GM12878 (cell line): ENCODE measurements at regions of chr3 and their contacts with region 1.

Region 1: GRCh38 chr3:171566803-171567422 is 106.7 kb upstream of the TNIK start:
- DNase-seq: peak; percentile 42
- ATAC-seq: peak; percentile 81
- H3K4me3 ChIP-seq: no peak overlapping the region
- H3K27ac ChIP-seq: no peak overlapping the region
- H3K4me1 ChIP-seq: peaks cover 3% of the 10 kb centered on the region; the same call in 1 of the 2 replicates
- H3K27me3 ChIP-seq: no peaks in the 10 kb centered on the region
- CTCF ChIP-seq: peak; percentile 46 to 86 (median 63); a peak in 5 of 6 replicates
- EP300 ChIP-seq: no peak
- POLR2A ChIP-seq: no peak
- RAD21 ChIP-seq: peak; percentile 95

Region 2: DNA sequence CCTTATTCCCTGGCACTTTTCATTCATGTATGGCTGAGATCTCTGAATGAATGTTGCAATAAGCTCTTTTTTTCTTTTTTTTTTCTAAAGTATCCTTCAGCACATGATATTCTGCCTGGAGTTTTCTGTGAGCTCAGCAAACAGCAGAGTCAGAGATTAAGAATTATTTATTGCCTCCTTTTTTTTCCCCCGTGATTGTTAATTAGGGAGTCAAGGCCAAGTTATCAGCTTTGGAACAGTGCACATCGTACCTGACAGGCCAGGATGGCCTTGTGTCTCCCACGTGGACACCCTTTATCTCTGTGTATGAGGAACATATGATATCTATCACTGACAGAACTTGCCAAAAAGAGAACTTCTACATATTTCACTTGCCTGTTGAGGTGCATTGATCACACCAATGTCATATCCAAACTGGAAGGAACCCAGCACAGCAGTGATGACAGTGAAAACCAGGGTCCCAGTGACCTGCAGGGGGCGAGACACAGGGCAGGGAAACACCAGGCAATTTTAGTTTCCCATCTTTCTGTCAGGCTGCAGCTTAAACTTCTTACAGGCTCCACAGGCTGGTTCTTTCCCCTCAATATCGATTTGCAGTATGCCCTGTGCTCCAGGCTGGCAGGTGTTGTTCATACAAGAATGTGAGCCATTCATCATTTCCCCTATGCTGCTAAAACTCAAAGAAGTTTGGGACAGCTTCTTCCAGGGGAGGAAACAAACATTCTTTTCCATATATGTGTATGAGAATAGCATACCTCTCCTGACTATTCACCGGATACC is 548.6 kb before region 1 on chr3:
- CTCF ChIA-PET with region 1: interaction called, 21 read pairs
- POLR2A ChIA-PET with region 1: no interaction called
- RAD21 ChIA-PET with region 1: interaction called, 4 read pairs
- SMC1A ChIA-PET with region 1: interaction called, 3 read pairs
- in situ Hi-C with region 1: no loop called
- intact Hi-C with region 1: no loop called
- DNase-seq: no peak
- ATAC-seq: peak; percentile 56
- H3K4me3 ChIP-seq: no peak overlapping the region
- H3K27ac ChIP-seq: no peak overlapping the region
- H3K4me1 ChIP-seq: no peaks in the 10 kb centered on the region
- H3K27me3 ChIP-seq: no peaks in the 10 kb centered on the region; a peak in 1 of 4 replicates
- CTCF ChIP-seq: 0 out of 6 replicates have a peak, but pooled peaks of 2 of the 3 experiments have one; percentile 2 to 16
- EP300 ChIP-seq: no peak
- POLR2A ChIP-seq: no peak
- RAD21 ChIP-seq: no peak

Region 3: DNA sequence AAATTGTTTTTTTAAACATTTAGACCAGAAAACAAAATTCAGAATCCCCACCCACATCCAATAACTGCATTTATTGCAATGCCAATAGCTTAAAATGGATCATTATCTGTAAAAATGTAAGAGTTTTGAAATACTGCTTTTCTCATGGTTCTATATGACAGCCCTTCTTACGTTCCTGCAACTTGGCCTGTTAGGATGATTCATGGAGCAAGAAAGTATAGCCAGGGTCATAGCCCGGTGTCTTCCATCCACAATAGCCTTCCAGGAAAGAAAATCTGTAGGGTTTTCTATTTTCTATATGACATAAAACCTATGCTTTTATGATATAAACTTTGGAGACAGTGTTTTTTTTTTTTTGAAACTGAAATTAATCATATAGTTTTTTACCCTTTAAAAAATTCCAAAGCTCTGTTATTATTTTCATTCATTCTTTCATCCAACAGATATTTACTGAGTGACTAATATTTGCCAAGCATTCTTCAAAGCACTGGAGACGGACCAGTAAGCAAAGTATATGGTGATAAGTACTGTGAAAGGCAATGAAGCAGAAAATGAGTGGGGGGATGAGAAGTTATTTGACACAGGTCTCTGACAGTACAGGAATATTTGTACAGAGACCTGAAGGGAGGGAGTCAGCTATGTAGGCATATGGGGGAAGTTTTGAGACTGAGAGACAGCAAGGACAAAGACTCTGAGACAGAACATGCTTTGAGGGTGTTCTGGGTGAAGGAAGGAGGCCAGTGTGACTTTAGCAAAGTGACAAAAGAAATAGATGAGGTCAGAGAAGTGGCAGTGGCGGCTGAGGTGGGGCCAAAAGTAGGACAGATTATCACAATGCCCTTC is 511.4 kb before region 1 on chr3:
- CTCF ChIA-PET with region 1: interaction called, 94 read pairs
- POLR2A ChIA-PET with region 1: no interaction called
- RAD21 ChIA-PET with region 1: interaction called, 59 read pairs
- SMC1A ChIA-PET with region 1: interaction called, 79 read pairs
- in situ Hi-C with region 1: no loop called
- intact Hi-C with region 1: loop called (anchors 1 kb)
- DNase-seq: no peak
- ATAC-seq: peak; percentile 9; the same call in 1 of the 3 replicates
- H3K4me3 ChIP-seq: no peak overlapping the region
- H3K27ac ChIP-seq: no peak overlapping the region
- H3K4me1 ChIP-seq: no peaks in the 10 kb centered on the region
- H3K27me3 ChIP-seq: no peaks in the 10 kb centered on the region
- CTCF ChIP-seq: no peak
- EP300 ChIP-seq: no peak
- POLR2A ChIP-seq: no peak
- RAD21 ChIP-seq: no peak

Region 4: GRCh38 chr3:171162986-171163723 is 403.8 kb before region 1 on chr3:
- CTCF ChIA-PET with region 1: interaction called, 37 read pairs
- POLR2A ChIA-PET with region 1: no interaction called
- RAD21 ChIA-PET with region 1: interaction called, 18 read pairs
- SMC1A ChIA-PET with region 1: interaction called, 22 read pairs
- in situ Hi-C with region 1: loop called (anchors 5 kb)
- intact Hi-C with region 1: loop called (anchors 1 kb)
- DNase-seq: no peak
- ATAC-seq: peak; percentile 50
- H3K4me3 ChIP-seq: no peak overlapping the region
- H3K27ac ChIP-seq: no peak overlapping the region; the same call in 1 of the 2 replicates
- H3K4me1 ChIP-seq: peaks cover 14% of the 10 kb centered on the region
- H3K27me3 ChIP-seq: no peaks in the 10 kb centered on the region
- CTCF ChIP-seq: peak; percentile 58 to 87 (median 63); a peak in 5 of 6 replicates
- EP300 ChIP-seq: no peak
- POLR2A ChIP-seq: no peak
- RAD21 ChIP-seq: peak; percentile 77

Region 5: GRCh38 chr3:171248425-171249111 is 318.3 kb before region 1 on chr3:
- CTCF ChIA-PET with region 1: no interaction called
- POLR2A ChIA-PET with region 1: no interaction called
- RAD21 ChIA-PET with region 1: no interaction called
- SMC1A ChIA-PET with region 1: interaction called, 14 read pairs
- in situ Hi-C with region 1: no loop called
- intact Hi-C with region 1: loop called (anchors 10 kb)
- DNase-seq: no peak
- ATAC-seq: peak; percentile 80
- H3K4me3 ChIP-seq: peak overlapping the region; percentile 53
- H3K27ac ChIP-seq: peak overlapping the region; percentile 80
- H3K4me1 ChIP-seq: peaks cover 68% of the 10 kb centered on the region
- H3K27me3 ChIP-seq: no peaks in the 10 kb centered on the region
- CTCF ChIP-seq: no peak
- EP300 ChIP-seq: peak; percentile 80 to 90
- POLR2A ChIP-seq: no peak
- RAD21 ChIP-seq: no peak

Region 6: DNA sequence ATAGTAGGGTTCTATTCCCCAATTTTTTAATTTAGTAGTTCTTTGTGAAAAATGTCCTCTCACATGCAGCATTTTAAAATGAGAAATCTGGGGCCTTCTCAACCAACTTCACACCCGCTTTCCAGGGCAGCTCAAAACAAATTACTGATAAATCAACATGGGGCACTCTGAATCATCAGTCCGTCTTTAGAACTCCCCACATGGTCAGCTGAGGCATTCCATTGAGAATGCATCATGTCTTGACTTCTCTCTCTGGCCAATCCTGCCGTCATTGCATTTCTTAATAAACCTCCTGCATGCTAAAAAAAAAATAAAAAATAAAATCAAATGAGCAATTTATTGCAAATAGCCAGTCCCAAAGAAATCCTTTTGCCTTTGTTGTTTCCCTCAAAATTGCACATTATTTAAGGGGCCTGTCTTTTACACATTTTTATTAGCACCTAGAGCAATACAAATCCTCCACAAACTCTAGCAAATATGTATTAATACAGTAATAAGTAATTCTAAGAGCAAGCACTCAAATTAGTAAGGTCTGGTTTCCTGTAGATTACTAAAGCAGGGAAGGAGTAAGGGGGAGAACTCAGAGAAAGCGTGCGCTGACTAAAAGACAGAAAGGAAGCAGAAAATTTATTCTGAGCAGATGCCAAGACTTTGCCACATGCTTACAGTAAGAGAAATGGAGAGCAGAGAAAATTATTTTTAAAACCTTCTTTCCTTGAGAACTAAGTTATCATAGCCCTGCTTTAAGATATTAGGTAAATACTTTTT is 282.4 kb before region 1 on chr3:
- CTCF ChIA-PET with region 1: interaction called, 4 read pairs
- POLR2A ChIA-PET with region 1: no interaction called
- RAD21 ChIA-PET with region 1: interaction called, 3 read pairs
- SMC1A ChIA-PET with region 1: interaction called, 5 read pairs
- in situ Hi-C with region 1: no loop called
- intact Hi-C with region 1: loop called (anchors 10 kb)
- DNase-seq: peak; percentile 76
- ATAC-seq: peak; percentile 64
- H3K4me3 ChIP-seq: peak overlapping the region; percentile 36; the same call in 1 of the 2 replicates
- H3K27ac ChIP-seq: peak overlapping the region; percentile 96
- H3K4me1 ChIP-seq: peaks cover 61% of the 10 kb centered on the region
- H3K27me3 ChIP-seq: no peaks in the 10 kb centered on the region
- CTCF ChIP-seq: no peak
- EP300 ChIP-seq: peak in 1 of 2 experiments; percentile 21; a peak in 1 of 4 replicates
- POLR2A ChIP-seq: no peak
- RAD21 ChIP-seq: no peak

Region 7: DNA sequence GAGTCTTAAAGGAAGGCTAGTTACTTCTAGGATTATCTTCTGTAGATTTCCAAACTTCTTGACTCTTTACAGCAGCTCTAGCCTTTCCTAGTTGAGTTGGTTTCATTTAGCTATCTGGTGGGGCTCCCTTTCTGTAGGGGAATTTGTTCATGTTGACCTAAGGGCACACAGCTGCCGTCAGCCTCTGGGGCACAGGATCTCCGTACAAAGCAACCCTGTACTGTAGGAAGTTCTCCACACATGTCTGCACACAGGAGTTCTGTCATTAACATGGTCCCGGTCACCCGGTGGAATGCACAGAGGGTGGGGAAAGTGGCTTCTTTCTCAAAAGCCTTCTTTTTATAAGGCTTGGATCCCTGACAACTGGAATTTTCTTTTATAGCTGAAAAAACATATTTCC is 18.0 kb before region 1 on chr3:
- CTCF ChIA-PET with region 1: interaction called, 4 read pairs
- POLR2A ChIA-PET with region 1: no interaction called
- RAD21 ChIA-PET with region 1: no interaction called
- SMC1A ChIA-PET with region 1: interaction called, 16 read pairs
- in situ Hi-C with region 1: no loop called
- intact Hi-C with region 1: no loop called
- DNase-seq: no peak
- ATAC-seq: no peak
- H3K4me3 ChIP-seq: no peak overlapping the region
- H3K27ac ChIP-seq: no peak overlapping the region
- H3K4me1 ChIP-seq: no peaks in the 10 kb centered on the region
- H3K27me3 ChIP-seq: no peaks in the 10 kb centered on the region
- CTCF ChIP-seq: no peak
- EP300 ChIP-seq: no peak
- POLR2A ChIP-seq: no peak
- RAD21 ChIP-seq: no peak

Region 8: DNA sequence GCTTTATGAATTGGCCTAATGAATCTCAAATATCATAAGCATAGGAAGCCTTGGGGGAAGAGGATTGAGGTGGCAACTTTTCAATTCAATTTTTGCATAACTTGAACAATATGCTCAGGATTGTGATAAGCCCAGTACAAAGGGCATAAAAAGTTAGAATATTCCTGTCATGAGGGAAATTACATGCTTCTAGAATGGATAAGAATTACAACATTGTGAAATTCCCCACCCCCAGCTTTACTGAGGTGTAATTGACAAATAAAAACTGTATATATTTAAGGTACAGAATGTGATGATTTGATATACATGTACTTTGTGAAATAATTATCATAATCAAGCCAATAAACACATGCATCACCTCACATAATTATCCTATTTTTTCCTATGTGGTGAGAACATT is 25.9 kb after region 1 on chr3:
- CTCF ChIA-PET with region 1: no interaction called
- POLR2A ChIA-PET with region 1: no interaction called
- RAD21 ChIA-PET with region 1: no interaction called
- SMC1A ChIA-PET with region 1: no interaction called
- in situ Hi-C with region 1: no loop called
- intact Hi-C with region 1: no loop called
- DNase-seq: no peak
- ATAC-seq: no peak
- H3K4me3 ChIP-seq: no peak overlapping the region
- H3K27ac ChIP-seq: no peak overlapping the region
- H3K4me1 ChIP-seq: no peaks in the 10 kb centered on the region
- H3K27me3 ChIP-seq: no peaks in the 10 kb centered on the region
- CTCF ChIP-seq: no peak
- EP300 ChIP-seq: no peak
- POLR2A ChIP-seq: no peak
- RAD21 ChIP-seq: no peak

Region 9: GRCh38 chr3:171690281-171690680 is 123.4 kb after region 1 on chr3:
- CTCF ChIA-PET with region 1: no interaction called
- POLR2A ChIA-PET with region 1: no interaction called
- RAD21 ChIA-PET with region 1: no interaction called
- SMC1A ChIA-PET with region 1: no interaction called
- in situ Hi-C with region 1: no loop called
- intact Hi-C with region 1: no loop called
- DNase-seq: peak; percentile 21
- ATAC-seq: peak; percentile 74
- H3K4me3 ChIP-seq: no peak overlapping the region
- H3K27ac ChIP-seq: peak overlapping the region; percentile 23
- H3K4me1 ChIP-seq: peaks cover 3% of the 10 kb centered on the region; the same call in 1 of the 2 replicates
- H3K27me3 ChIP-seq: no peaks in the 10 kb centered on the region
- CTCF ChIP-seq: no peak
- EP300 ChIP-seq: no peak
- POLR2A ChIP-seq: no peak
- RAD21 ChIP-seq: no peak